Activated naive CD4-positive, alpha-beta T cell treated with anti-CD3 and anti-CD28 coated beads, Interleukin-2, amount 10 ng/mL, durations not matched to agents 7 days and 5 days (primary cell): ENCODE measurements at regions of chr7 and their contacts with region 1.

Region 1: DNA sequence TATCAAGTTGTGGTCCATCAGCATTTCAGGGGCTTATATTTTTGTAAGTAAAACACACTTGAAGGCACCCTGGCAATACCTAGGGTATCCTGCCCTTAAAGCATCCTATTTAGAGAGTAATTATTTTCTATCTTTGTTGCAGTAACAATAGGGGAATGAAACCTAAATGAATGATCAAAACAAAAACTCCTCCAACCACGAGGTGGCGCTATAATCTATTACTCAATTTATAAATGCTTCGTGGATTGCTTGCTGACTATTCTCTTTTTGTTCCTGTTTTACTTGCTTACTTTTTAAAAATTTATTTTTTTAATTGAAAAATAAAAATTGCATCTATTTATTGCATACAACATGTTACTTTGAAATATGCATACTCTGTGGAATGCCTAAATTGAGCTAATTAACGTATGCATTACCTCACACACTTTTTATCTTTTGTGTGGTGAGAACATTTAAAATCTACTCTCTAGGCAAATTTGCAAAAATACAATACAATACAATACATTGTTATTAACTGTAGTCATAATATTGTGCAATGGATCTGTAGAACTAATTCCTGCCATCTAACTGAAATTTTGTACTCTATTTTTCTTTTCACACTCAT is 147.7 kb upstream of the BMPER start:
- DNase-seq: peak; percentile 26
- H3K4me3 Mint-ChIP-seq: no peak overlapping the region
- H3K27ac Mint-ChIP-seq: no peak overlapping the region
- H3K4me1 Mint-ChIP-seq: no peaks in the 10 kb centered on the region
- H3K27me3 Mint-ChIP-seq: peaks cover 1% of the 10 kb centered on the region

Region 2: GRCh38 chr7:33807779-33808482 is 50.3 kb after region 1 on chr7:
- CTCF ChIA-PET with region 1: interaction called, 10 read pairs
- DNase-seq: no peak
- H3K4me3 Mint-ChIP-seq: no peak overlapping the region
- H3K27ac Mint-ChIP-seq: no peak overlapping the region
- H3K4me1 Mint-ChIP-seq: no peaks in the 10 kb centered on the region
- H3K27me3 Mint-ChIP-seq: no peaks in the 10 kb centered on the region

Region 3: DNA sequence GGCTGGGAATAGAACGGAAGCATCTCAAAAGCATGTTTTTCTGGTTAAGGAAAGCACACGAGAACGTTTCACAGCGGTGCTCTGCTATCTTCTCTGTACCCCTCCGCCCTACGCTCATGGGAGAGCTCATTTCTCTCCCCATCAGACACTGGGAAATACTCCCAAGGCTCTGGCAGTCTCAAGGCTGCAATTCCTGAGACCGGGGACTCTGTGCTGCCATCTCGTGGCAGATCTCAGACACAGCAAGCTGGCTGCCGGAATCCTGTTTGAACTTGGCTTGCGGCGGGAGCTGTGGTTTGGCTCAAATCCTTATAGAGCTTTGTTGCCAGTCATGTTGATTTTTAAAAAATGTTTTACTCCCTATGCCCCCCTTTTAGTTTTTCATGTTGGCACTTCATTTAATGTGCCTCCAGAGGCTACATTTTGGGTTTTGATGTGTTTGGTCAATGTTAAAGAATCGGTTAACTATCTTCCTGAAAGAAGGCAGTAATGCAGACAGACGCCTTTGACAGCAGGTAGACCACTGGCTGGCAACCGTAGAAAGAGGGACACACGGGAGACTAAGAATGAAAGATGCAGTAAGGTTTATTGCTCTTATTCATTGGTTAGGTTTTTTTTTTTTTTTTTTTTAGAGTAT is 175.3 kb after region 1 on chr7:
- CTCF ChIA-PET with region 1: interaction called, 16 read pairs
- DNase-seq: peak; percentile 73
- H3K4me3 Mint-ChIP-seq: no peak overlapping the region
- H3K27ac Mint-ChIP-seq: no peak overlapping the region
- H3K4me1 Mint-ChIP-seq: no peaks in the 10 kb centered on the region
- H3K27me3 Mint-ChIP-seq: peaks cover 22% of the 10 kb centered on the region